ENCODE measurements at regions of chr2 and their contacts with region 1.

Region 1: DNA sequence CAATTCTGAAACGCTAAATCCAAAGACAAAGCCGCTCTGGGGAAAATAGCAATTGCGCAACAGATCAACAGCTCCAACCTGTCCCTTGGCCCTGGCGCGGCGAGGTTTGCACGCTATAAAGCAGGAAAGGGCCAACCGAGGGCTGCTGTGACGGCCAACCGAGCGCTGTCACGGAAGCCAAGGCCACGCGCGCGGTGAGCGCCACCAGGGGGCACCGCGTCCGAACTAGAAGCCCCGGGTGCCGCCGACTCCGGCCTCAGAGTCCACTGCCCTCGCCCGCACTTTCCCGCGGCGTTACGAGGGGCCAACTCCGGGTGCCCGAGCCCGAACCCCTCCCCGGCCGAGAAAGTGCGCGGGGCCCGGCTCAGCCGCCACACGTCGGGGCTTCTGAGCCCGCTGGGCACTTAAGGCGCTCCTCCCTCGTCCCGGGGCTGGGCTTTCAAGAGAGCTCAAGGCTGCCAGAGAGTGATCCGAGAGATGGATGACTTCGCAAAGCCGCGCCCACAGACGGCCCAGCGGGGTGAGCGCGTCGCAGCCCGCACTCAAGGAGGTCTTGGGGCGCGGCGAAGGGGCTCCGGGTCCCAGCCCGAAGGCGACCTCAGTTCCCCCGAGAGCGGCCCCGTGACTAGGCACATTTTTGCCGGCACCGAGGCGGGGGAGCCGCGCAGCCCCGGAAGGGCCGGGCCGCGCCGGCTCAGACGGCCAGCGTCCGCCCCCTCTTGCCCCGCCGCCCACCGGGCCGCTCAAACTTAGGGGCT is 897 bp downstream of the NFE2L2 start:
- DNase-seq: peak; percentile 99
- ATAC-seq: peak; percentile 88

Region 2: GRCh38 chr2:177164584-177165052 is 99.0 kb before region 1 on chr2:
- intact Hi-C with region 1: loop called (anchors 1 kb)
- DNase-seq: peak; percentile 85
- ATAC-seq: peak; percentile 91

Region 3: GRCh38 chr2:177229448-177230242 is 34.0 kb before region 1 on chr2:
- intact Hi-C with region 1: loop called (anchors 5 kb)
- DNase-seq: no peak
- ATAC-seq: no peak

Region 4: GRCh38 chr2:177281400-177282180 is 18.0 kb after region 1 on chr2:
- intact Hi-C with region 1: loop called (anchors 1 kb)
- DNase-seq: no peak
- ATAC-seq: peak; percentile 38

Region 5: DNA sequence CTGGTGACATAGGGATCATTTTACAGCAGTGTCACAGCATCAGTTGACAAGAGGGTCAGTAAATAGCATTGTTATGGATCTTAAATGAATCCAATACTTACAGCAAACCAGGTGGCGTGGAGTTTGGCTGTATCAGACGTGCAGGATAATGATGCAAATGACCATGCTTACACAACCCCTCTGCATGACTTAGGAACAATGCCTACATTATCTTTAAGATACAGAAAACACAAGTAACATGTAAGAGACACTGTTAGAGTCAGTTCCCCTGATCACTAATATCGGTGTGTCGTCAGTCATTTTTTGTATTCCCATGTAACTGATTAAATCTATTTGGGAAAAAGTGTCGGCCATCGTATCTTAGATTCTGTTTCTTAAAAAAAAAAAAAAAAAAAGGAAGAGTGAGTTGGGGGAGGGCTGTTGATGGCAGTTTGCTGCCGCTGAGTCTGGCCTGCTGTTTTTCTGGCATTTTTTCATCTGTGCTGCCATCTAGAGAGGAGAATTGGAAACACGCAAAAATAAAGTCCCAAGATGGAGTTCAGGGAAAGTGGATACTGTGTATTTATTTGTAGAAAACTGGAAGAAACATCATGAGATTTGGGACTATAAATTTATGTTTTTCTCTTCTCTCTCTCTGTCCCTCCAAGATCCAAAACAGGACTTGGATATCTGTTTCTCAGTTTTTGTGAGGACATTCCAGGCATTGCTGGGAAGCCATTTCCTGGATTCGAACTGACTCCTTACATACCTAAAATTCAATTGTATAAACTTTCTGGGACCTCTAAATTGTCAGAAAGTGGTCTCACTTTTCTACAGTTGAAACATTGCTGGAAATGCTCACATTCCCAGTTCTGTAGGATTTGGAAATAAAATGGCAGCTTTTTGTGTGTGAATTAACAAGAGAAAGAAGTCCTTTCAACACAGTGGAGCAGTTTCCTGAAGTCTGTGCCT is 68.7 kb after region 1 on chr2:
- intact Hi-C with region 1: loop called (anchors 1 kb)
- DNase-seq: no peak
- ATAC-seq: peak; percentile 86

Region 6: GRCh38 chr2:177763532-177764265 is 500.1 kb after region 1 on chr2:
- intact Hi-C with region 1: loop called (anchors 10 kb)
- DNase-seq: peak; percentile 77
- ATAC-seq: peak; percentile 86

Measured in Right ventricle myocardium inferior (tissue), 1 donor.